ENCODE measurements at regions of chr11 and their contacts with region 1.

Region 1: DNA sequence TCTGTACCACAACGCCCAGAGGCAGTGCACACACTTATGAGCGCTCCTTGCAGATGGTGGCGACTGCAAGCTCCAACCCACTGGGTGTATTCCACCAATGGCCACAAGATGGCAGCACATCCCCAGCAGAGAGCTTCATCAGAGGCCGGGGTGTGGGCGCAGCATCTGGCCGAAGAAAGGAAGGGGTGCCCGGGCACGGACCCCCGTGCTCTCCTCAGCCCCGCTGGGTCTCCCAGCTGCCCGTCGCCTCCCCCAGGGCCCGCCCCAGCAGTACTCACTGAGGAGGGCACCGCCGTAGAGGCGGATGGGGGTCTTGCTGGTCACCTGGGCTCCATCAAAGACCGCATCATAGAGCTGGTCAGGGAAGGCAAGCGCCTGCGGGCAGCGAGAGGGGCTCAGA is 14.2 kb downstream of the TP53I11 start:
- DNase-seq: no peak
- H3K4me3 ChIP-seq: no peak overlapping the region
- H3K27ac ChIP-seq: no peak overlapping the region
- H3K4me1 ChIP-seq: peaks cover 11% of the 10 kb centered on the region
- H3K27me3 ChIP-seq: no peaks in the 10 kb centered on the region
- CTCF ChIP-seq: peak; percentile 92 to 96 (median 93)
- POLR2A ChIP-seq: no peak

Region 2: DNA sequence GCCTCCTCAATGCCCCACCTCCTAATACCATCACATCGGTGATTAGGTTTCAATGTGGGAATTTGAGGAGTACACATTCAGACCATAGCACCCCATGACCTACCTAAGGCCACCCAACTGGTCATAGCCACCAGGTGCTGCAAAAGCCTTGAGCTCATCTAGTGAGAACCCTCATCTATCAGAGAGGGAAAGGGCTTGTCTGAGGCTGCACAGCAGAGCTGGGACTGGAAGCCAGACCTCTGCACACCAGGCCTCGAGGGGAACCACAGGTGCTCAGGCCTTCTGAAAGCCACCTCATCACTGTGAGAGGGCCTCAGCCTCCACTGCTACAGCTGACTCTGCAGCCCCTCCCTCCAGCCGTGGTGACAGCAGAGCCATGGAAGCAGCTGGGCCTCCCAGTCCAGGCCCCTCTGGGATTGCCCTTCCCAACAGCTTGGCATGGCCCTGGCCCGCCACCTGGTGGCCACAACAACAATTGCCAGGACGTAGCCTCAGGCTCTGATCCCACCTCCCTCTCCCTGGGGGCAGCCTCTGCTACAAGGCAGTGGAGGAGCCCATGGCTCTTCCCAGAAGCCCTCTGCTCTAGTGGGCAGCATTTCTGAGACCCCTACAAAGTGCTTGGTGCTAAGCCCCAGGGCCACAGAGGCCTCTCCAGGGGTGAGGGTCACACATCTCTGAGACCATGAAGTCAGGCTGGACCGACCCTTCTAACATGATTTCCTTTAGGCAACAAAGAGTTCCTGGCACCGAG is 168.9 kb after region 1 on chr11:
- intact Hi-C with region 1: loop called (anchors 1 kb)
- DNase-seq: peak; percentile 72 to 85
- H3K4me3 ChIP-seq: no peak overlapping the region
- H3K27ac ChIP-seq: no peak overlapping the region
- H3K4me1 ChIP-seq: peaks cover 8% of the 10 kb centered on the region
- H3K27me3 ChIP-seq: no peaks in the 10 kb centered on the region
- CTCF ChIP-seq: peak; percentile 84 to 94 (median 90)
- POLR2A ChIP-seq: no peak

Region 3: GRCh38 chr11:45298718-45299117 is 362.2 kb after region 1 on chr11:
- intact Hi-C with region 1: loop called (anchors 10 kb)
- DNase-seq: peak; percentile 29 to 40
- H3K4me3 ChIP-seq: no peak overlapping the region
- H3K27ac ChIP-seq: no peak overlapping the region
- H3K4me1 ChIP-seq: no peaks in the 10 kb centered on the region
- H3K27me3 ChIP-seq: no peaks in the 10 kb centered on the region
- CTCF ChIP-seq: no peak
- POLR2A ChIP-seq: no peak